ENCODE measurements at regions of chr18 and their contacts with region 1.

Region 1: GRCh38 chr18:8988261-8988871 is 114.1 kb upstream of the NDUFV2 start:
- DNase-seq: peak; percentile 44
- H3K4me3 ChIP-seq: no peak overlapping the region
- H3K27ac ChIP-seq: no peak overlapping the region
- H3K4me1 ChIP-seq: no peaks in the 10 kb centered on the region
- H3K27me3 ChIP-seq: no peaks in the 10 kb centered on the region
- CTCF ChIP-seq: peak; percentile 75

Region 2: GRCh38 chr18:8478166-8478967 is 510.0 kb before region 1 on chr18:
- intact Hi-C with region 1: loop called (anchors 5 kb)
- DNase-seq: peak; percentile 67
- H3K4me3 ChIP-seq: no peak overlapping the region
- H3K27ac ChIP-seq: no peak overlapping the region
- H3K4me1 ChIP-seq: no peaks in the 10 kb centered on the region
- H3K27me3 ChIP-seq: no peaks in the 10 kb centered on the region
- CTCF ChIP-seq: peak; percentile 81

Region 3: DNA sequence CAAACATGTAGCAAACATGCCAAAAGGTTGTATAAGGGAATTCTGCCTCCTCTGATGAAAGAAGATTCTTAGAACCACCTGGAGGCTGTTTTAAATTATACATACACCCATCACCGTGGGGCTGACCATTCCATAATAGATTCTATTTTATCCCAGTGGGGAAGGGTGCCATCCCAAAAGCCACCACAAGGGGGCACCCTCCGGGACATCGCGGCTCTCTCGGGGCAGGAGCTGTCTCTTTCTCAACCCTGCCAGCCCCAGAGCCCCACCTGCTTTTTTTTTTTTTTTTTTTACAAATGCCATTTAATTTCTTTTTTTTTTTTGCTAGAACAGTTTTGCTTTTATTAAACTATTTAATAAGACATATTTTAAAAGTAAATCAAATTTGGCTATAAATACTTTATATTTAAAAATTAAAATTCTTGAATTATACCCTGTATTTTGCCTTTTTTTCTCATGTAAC is 291.6 kb before region 1 on chr18:
- intact Hi-C with region 1: loop called (anchors 2 kb)
- DNase-seq: peak; percentile 82
- H3K4me3 ChIP-seq: no peak overlapping the region
- H3K27ac ChIP-seq: no peak overlapping the region
- H3K4me1 ChIP-seq: peaks cover 4% of the 10 kb centered on the region
- H3K27me3 ChIP-seq: peaks cover 4% of the 10 kb centered on the region
- CTCF ChIP-seq: peak; percentile 94